ENCODE measurements at regions of chr12 and their contacts with region 1.

Region 1: DNA sequence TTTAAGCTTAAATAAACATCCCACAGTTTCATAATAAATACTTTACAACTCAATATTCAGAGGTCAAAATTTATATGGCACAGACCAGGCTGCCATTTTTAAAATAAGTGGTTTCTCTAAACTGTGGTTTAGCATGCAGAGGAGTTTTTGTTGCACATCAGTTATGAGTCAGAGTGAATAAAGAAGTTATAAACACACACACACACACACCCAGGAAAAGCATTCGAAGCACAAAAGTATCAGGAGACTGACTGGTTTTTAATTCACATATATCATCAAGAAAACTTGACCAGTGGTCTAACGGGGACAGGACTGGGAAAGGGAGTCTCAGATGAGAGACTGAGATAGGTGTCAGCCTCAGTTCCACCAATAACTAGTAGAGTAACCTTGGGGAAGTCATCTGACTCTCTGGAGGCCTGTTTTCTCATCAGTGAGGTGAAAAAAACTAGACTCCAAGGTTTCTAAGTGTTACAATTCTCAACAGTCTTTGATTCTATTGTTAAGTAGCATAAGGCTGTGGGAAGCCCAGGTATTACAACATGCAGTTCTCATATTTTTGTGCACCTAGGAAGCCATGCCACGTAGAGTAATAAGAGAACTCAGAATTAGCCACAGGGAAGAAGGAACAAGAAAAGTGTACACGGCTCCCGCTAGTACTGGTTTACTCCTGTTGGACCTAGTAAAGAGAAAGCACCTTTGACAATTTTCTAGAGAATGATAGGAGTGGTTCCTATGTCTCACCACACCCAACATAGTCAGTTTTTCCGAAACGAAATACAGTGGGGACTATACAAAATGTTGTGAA is 5.2 kb downstream of the PPTC7 start:
- DNase-seq: peak; percentile 72
- H3K4me3 Mint-ChIP-seq: peak overlapping the region; percentile 58
- H3K27ac Mint-ChIP-seq: peak overlapping the region; percentile 98
- H3K4me1 Mint-ChIP-seq: peaks cover 75% of the 10 kb centered on the region
- H3K27me3 Mint-ChIP-seq: no peaks in the 10 kb centered on the region

Region 2: DNA sequence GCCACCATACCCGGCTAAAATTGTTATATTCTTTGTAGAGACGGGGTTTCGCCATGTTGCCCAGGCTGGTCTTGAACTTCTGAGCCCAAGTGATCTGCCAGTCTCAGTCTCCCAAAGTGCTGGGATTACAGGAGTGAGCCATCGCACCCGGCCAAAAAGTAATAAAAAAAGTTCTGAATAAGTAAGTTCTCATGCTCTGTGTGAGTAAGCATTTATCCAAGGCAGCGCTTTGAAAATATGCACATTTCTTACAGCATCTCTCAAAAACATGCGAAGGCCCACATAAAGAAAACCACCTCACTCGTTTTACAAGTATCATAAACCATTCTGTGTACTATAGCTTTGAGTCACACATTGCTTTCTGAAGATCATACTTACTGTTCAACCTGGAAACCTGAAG is 590.3 kb before region 1 on chr12:
- CTCF ChIA-PET with region 1: no interaction called
- intact Hi-C with region 1: loop called (anchors 2 kb)
- DNase-seq: peak; percentile 69
- H3K4me3 Mint-ChIP-seq: no peak overlapping the region
- H3K27ac Mint-ChIP-seq: peak overlapping the region; percentile 84
- H3K4me1 Mint-ChIP-seq: peaks cover 61% of the 10 kb centered on the region
- H3K27me3 Mint-ChIP-seq: no peaks in the 10 kb centered on the region

Region 3: GRCh38 chr12:110468212-110469048 is 109.5 kb before region 1 on chr12 and contains the starts of genes FAM216A and GPN3:
- CTCF ChIA-PET with region 1: no interaction called
- intact Hi-C with region 1: loop called (anchors 1 kb)
- DNase-seq: peak; percentile 98
- H3K4me3 Mint-ChIP-seq: peak within 1 kb of the TSS; percentile 98
- H3K27ac Mint-ChIP-seq: peak within 1 kb of the TSS; percentile 96
- H3K4me1 Mint-ChIP-seq: peaks cover 41% of the 10 kb centered on the region
- H3K27me3 Mint-ChIP-seq: no peaks in the 10 kb centered on the region
- total RNA-seq, gene FAM216A: 37.0 to 39.5 TPM
- total RNA-seq, gene GPN3: 58.2 to 59.8 TPM

Region 4: GRCh38 chr12:110531741-110532333 is 46.1 kb before region 1 on chr12:
- CTCF ChIA-PET with region 1: interaction called, 3 read pairs
- intact Hi-C with region 1: loop called (anchors 1 kb)
- DNase-seq: no peak
- H3K4me3 Mint-ChIP-seq: no peak overlapping the region
- H3K27ac Mint-ChIP-seq: peak overlapping the region; percentile 37
- H3K4me1 Mint-ChIP-seq: peaks cover 28% of the 10 kb centered on the region
- H3K27me3 Mint-ChIP-seq: no peaks in the 10 kb centered on the region

Region 5: GRCh38 chr12:110619534-110619953 is 41.6 kb after region 1 on chr12:
- CTCF ChIA-PET with region 1: no interaction called
- intact Hi-C with region 1: loop called (anchors 1 kb)
- DNase-seq: peak; percentile 74
- H3K4me3 Mint-ChIP-seq: no peak overlapping the region
- H3K27ac Mint-ChIP-seq: peak overlapping the region; percentile 79
- H3K4me1 Mint-ChIP-seq: peaks cover 21% of the 10 kb centered on the region
- H3K27me3 Mint-ChIP-seq: no peaks in the 10 kb centered on the region

Region 6: DNA sequence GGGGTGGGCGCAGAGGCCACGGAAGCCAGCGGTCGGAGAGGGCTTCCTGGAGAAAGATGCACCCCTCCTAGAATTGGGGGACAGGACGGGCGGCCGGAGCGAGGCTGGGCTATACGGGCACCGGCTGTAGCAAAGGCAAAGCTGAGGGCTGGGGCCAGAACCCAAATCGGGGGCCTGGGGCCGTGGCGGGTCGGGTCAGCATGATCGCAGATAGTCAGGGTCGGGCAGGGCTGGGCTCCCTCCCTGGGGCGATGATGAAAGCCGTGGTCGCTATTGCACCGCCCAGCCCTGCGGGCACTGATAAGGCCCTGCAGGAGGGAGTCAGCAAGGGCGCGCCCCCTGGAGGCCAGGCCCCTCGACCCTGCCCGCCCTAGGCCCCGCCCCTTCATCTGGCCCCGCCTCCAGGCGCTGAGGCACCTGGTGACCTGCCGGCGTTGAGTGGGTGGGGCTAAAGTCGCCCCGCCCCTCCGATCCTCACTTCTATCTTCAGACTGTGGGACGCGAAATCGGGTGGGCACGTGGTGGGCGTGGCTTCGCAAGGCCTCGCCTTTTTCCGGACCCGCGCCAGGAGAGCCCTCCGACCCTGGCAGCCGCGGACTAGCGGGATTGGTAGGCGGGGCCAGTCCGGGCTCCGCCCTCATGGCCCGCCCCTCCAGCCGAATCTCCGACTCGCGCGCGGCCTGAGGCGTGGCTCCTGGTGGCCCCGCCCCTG is 827.4 kb after region 1 on chr12:
- CTCF ChIA-PET with region 1: no interaction called
- intact Hi-C with region 1: loop called (anchors 5 kb)
- DNase-seq: peak; percentile 99
- H3K4me3 Mint-ChIP-seq: peak overlapping the region; percentile 77
- H3K27ac Mint-ChIP-seq: peak overlapping the region; percentile 96
- H3K4me1 Mint-ChIP-seq: peaks cover 57% of the 10 kb centered on the region
- H3K27me3 Mint-ChIP-seq: no peaks in the 10 kb centered on the region